GM13977 (cell line): ENCODE measurements at regions of chr15 and their contacts with region 1.

Region 1: DNA sequence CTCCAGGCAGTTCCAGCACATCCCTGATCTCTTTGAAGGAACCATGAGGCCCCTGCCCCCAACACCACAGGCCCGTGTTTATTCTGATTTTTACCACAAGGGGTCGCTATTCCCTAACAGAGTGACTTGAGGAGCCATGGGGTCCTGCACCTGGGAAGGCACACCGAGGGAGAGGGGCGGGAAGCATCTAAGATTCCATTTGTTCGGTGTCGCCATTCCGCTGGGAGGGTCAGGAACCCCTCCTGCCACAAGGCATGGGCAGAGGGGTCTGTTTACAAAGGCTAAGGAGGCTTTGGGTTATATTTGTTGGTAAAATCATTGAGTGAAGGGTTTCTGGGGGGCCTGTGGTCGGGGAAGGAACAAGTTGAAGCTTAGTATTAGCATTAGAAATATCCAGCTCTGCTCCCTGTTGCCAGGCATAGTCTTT is 77.1 kb downstream of the WDR76 start:
- DNase-seq: peak; percentile 75
- CTCF ChIP-seq: peak; percentile 80

Region 2: GRCh38 chr15:44058126-44058525 is 154.2 kb after region 1 on chr15:
- in situ Hi-C with region 1: loop called (anchors 10 kb)
- DNase-seq: no peak
- CTCF ChIP-seq: no peak

Region 3: GRCh38 chr15:44222478-44222877 is 318.6 kb after region 1 on chr15:
- in situ Hi-C with region 1: loop called (anchors 10 kb)
- DNase-seq: no peak
- CTCF ChIP-seq: no peak